Activated naive CD4-positive, alpha-beta T cell treated with anti-CD3 and anti-CD28 coated beads for 36 hours (primary cell): ENCODE measurements at regions of chr14 and their contacts with region 1.

Region 1: DNA sequence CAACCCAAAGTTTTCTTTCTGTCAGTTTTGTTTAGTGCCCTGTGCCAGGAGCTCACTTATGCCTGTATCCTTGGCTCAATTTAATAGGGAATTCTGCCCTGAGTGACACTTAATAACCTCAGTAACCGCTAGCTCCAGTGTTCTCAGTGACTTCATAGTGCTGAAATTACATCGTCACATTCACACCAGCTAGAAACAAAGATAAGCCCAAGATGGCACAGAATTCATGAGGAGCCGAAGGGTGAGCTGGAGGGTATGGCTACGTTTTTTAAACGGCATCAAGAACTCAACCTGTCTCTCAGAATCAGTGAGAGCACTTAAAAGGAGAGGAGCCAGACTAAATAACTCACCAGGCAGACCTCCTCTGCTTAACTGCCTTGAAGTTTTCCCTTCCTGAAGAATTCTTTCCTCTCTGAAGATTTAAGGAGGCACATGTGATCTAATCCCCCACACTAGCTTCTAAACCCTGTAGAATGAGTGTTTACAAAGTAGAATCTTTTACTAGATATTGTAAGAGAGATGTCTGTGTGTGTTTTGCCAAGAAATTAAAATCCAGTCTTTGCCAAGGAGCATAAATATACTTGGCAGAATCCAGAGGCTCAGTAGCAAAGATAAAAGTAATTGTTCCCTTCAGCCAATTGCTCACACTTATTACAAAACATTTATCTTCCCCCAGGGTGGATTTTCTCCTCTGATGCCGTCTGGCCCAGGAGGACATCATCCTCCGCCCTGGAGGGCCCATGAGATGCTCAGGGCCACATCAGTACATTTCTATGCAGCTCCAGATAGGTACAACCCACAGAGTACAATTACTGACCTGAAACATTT is 37.3 kb downstream of the PTGER2 start:
- DNase-seq: no peak
- H3K4me3 Mint-ChIP-seq: no peak overlapping the region
- H3K27ac Mint-ChIP-seq: peak overlapping the region; percentile 43
- H3K4me1 Mint-ChIP-seq: peaks cover 52% of the 10 kb centered on the region
- H3K27me3 Mint-ChIP-seq: no peaks in the 10 kb centered on the region

Region 2: DNA sequence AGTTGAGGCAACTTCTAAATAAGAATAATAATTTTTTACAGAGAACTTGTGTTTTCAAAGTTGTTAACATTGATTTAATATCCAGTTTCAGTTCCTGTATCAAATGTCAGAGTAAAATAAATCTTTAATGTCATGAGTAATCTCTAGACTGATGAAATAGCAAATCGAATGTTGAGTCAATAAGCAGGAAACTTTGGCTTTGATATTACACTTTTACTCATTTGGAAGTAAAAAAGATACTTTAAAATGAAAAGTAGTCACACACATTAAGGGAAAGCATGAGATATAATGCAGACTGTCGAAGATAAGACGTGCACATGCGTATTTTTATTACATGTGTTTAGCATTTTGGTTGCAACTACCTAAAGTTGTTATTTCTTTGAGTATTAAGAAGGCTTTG is 162.1 kb before region 1 on chr14:
- CTCF ChIA-PET with region 1: no interaction called
- intact Hi-C with region 1: loop called (anchors 1 kb)
- DNase-seq: no peak
- H3K4me3 Mint-ChIP-seq: no peak overlapping the region
- H3K27ac Mint-ChIP-seq: no peak overlapping the region
- H3K4me1 Mint-ChIP-seq: peaks cover 12% of the 10 kb centered on the region
- H3K27me3 Mint-ChIP-seq: no peaks in the 10 kb centered on the region

Region 3: GRCh38 chr14:52313903-52314594 is 37.4 kb before region 1 on chr14 and contains the start of gene PTGER2:
- CTCF ChIA-PET with region 1: no interaction called
- intact Hi-C with region 1: loop called (anchors 1 kb)
- DNase-seq: peak; percentile 64
- H3K4me3 Mint-ChIP-seq: peak within 1 kb of the TSS; percentile 93
- H3K27ac Mint-ChIP-seq: peak within 1 kb of the TSS; percentile 79
- H3K4me1 Mint-ChIP-seq: peaks cover 56% of the 10 kb centered on the region
- H3K27me3 Mint-ChIP-seq: peaks cover 19% of the 10 kb centered on the region
- total RNA-seq, gene PTGER2: 0.67 to 1.2 TPM

Region 4: GRCh38 chr14:52413729-52414408 is 62.4 kb after region 1 on chr14:
- CTCF ChIA-PET with region 1: interaction called, 5 read pairs
- intact Hi-C with region 1: loop called (anchors 1 kb)
- DNase-seq: no peak
- H3K4me3 Mint-ChIP-seq: peak overlapping the region; percentile 14
- H3K27ac Mint-ChIP-seq: peak overlapping the region; percentile 85
- H3K4me1 Mint-ChIP-seq: peaks cover 39% of the 10 kb centered on the region
- H3K27me3 Mint-ChIP-seq: no peaks in the 10 kb centered on the region